ENCODE measurements at regions of chr7 and their contacts with region 1.

Region 1: DNA sequence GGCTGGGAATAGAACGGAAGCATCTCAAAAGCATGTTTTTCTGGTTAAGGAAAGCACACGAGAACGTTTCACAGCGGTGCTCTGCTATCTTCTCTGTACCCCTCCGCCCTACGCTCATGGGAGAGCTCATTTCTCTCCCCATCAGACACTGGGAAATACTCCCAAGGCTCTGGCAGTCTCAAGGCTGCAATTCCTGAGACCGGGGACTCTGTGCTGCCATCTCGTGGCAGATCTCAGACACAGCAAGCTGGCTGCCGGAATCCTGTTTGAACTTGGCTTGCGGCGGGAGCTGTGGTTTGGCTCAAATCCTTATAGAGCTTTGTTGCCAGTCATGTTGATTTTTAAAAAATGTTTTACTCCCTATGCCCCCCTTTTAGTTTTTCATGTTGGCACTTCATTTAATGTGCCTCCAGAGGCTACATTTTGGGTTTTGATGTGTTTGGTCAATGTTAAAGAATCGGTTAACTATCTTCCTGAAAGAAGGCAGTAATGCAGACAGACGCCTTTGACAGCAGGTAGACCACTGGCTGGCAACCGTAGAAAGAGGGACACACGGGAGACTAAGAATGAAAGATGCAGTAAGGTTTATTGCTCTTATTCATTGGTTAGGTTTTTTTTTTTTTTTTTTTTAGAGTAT is 27.6 kb downstream of the BMPER start:
- DNase-seq: peak; percentile 79 to 91 (median 89)
- ATAC-seq: peak; percentile 93 to 95
- H3K4me3 ChIP-seq: peak overlapping the region; percentile 4
- H3K27ac ChIP-seq: no peak overlapping the region
- H3K4me1 ChIP-seq: no peaks in the 10 kb centered on the region
- H3K27me3 ChIP-seq: no peaks in the 10 kb centered on the region

Region 2: GRCh38 chr7:33185786-33186185 is 747.2 kb before region 1 on chr7:
- intact Hi-C with region 1: loop called in 1 of 4 experiments (anchors 10 kb)
- DNase-seq: no peak
- ATAC-seq: peak in 1 of 2 donors; percentile 41
- H3K4me3 ChIP-seq: no peak overlapping the region
- H3K27ac ChIP-seq: no peak overlapping the region
- H3K4me1 ChIP-seq: no peaks in the 10 kb centered on the region
- H3K27me3 ChIP-seq: no peaks in the 10 kb centered on the region

Region 3: GRCh38 chr7:33243319-33243881 is 689.5 kb before region 1 on chr7:
- intact Hi-C with region 1: loop called in 2 of 4 experiments (anchors 5 to 10 kb)
- DNase-seq: no peak
- ATAC-seq: peak in 1 of 2 donors; percentile 68
- H3K4me3 ChIP-seq: no peak overlapping the region
- H3K27ac ChIP-seq: no peak overlapping the region
- H3K4me1 ChIP-seq: no peaks in the 10 kb centered on the region
- H3K27me3 ChIP-seq: no peaks in the 10 kb centered on the region

Region 4: DNA sequence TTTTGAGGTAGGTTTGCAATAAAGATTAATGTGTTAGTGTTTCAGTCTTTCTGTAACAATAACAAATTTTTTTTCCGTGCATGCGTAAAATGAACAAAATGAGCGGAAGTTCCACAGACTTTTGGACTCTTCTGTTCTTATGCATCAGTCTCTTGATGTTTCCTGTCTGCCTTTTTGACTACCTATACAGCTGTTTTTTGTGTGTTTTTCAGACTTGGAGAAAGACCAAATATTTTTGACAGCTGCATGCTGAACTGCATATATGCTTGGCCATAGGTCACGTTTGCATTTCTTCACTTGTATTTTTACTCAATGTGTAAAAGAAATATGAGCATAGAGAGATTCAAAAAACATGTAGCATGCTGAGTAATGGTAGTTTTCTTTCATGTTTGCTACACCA is 684.3 kb before region 1 on chr7:
- intact Hi-C with region 1: loop called in 2 of 4 experiments (anchors 5 to 10 kb)
- DNase-seq: no peak
- ATAC-seq: no peak
- H3K4me3 ChIP-seq: no peak overlapping the region
- H3K27ac ChIP-seq: no peak overlapping the region
- H3K4me1 ChIP-seq: no peaks in the 10 kb centered on the region
- H3K27me3 ChIP-seq: no peaks in the 10 kb centered on the region

Region 5: GRCh38 chr7:33757562-33758165 is 175.3 kb before region 1 on chr7:
- intact Hi-C with region 1: loop called in 1 of 4 experiments (anchors 5 kb)
- DNase-seq: no peak
- ATAC-seq: no peak
- H3K4me3 ChIP-seq: no peak overlapping the region
- H3K27ac ChIP-seq: no peak overlapping the region
- H3K4me1 ChIP-seq: no peaks in the 10 kb centered on the region
- H3K27me3 ChIP-seq: no peaks in the 10 kb centered on the region